ENCODE measurements at regions of chr4 and their contacts with region 1.

Region 1: DNA sequence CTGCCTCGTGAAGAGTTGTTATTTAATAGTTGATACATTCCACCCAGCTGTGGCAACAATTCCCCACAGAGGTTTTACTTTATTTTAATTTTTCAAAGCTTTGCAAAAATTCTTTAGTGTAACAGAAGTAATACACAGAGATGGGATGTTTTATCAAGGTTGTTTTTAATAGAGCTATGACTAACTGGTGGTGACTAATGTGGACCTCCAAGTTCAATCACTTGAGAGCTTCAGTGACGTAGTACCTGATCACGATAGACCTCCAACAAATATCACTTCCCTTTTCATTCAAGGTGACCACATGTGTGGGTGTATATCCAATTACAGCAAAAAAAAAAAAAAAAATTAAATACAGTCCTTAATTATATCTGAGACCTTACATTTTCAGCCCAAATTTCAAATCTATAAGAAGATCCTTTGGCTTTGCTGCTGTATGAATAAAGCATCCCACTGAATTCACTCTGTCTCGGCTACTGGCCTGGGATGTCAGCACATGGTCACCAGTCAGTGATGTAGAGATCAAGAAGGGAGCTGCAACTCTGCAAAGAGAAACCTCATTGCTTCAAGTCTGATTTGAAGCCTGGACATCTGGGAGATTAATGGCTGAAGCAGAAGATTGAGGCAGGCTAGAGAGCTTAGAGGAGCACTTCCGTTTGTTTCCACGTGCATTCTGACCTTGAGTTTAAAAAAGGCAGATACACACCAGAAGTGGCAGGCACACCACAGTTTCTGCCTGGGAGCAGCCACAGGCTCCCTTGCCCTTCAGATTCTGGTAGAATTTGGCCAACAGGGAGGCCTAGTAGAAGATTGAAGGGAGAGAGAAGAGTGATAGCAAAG is 345.9 kb upstream of the NOCT start:
- DNase-seq: no peak
- ATAC-seq: no peak
- H3K4me3 ChIP-seq: no peak overlapping the region
- H3K27ac ChIP-seq: no peak overlapping the region
- H3K4me1 ChIP-seq: peaks cover 20 to 39% of the 10 kb centered on the region in 2 experiments; a peak in 4 of 5 replicates
- H3K27me3 ChIP-seq: no peaks in the 10 kb centered on the region
- CTCF ChIP-seq: no peak
- EP300 ChIP-seq: no peak
- POLR2A ChIP-seq: no peak
- RAD21 ChIP-seq: no peak

Region 2: GRCh38 chr4:137124278-137124932 is 1545.3 kb before region 1 on chr4:
- CTCF ChIA-PET with region 1: no interaction called
- POLR2A ChIA-PET with region 1: no interaction called
- in situ Hi-C with region 1: no loop called
- intact Hi-C with region 1: loop called (anchors 10 kb)
- DNase-seq: peak in 2 of 4 experiments; percentile 2 to 3
- ATAC-seq: peak; percentile 39; the same call in 1 of the 3 replicates
- H3K4me3 ChIP-seq: no peak overlapping the region
- H3K27ac ChIP-seq: no peak overlapping the region
- H3K4me1 ChIP-seq: no peaks in the 10 kb centered on the region
- H3K27me3 ChIP-seq: no peaks in the 10 kb centered on the region
- CTCF ChIP-seq: peak in 2 of 3 experiments; percentile 21 to 31; a peak in 2 of 6 replicates
- EP300 ChIP-seq: no peak
- POLR2A ChIP-seq: no peak
- RAD21 ChIP-seq: peak in 1 of 2 experiments; percentile 29; a peak in 3 of 4 replicates

Region 3: GRCh38 chr4:138174981-138175794 is 494.5 kb before region 1 on chr4:
- CTCF ChIA-PET with region 1: no interaction called
- POLR2A ChIA-PET with region 1: no interaction called
- in situ Hi-C with region 1: loop called (anchors 10 kb)
- intact Hi-C with region 1: no loop called
- DNase-seq: no peak
- ATAC-seq: no peak
- H3K4me3 ChIP-seq: no peak overlapping the region
- H3K27ac ChIP-seq: no peak overlapping the region
- H3K4me1 ChIP-seq: no peaks in the 10 kb centered on the region
- H3K27me3 ChIP-seq: no peaks in the 10 kb centered on the region
- CTCF ChIP-seq: no peak
- EP300 ChIP-seq: no peak
- POLR2A ChIP-seq: no peak
- RAD21 ChIP-seq: no peak

Measured in K562 (cell line).